ENCODE measurements at regions of chr2 and their contacts with region 1.

Region 1: GRCh38 chr2:178522950-178523595 is 42.8 kb downstream of the PLEKHA3 start:
- DNase-seq: peak; percentile 88
- H3K4me3 Mint-ChIP-seq: peak overlapping the region; percentile 89
- H3K27ac Mint-ChIP-seq: peak overlapping the region; percentile 80
- H3K4me1 Mint-ChIP-seq: peaks cover 57% of the 10 kb centered on the region
- H3K27me3 Mint-ChIP-seq: no peaks in the 10 kb centered on the region

Region 2: DNA sequence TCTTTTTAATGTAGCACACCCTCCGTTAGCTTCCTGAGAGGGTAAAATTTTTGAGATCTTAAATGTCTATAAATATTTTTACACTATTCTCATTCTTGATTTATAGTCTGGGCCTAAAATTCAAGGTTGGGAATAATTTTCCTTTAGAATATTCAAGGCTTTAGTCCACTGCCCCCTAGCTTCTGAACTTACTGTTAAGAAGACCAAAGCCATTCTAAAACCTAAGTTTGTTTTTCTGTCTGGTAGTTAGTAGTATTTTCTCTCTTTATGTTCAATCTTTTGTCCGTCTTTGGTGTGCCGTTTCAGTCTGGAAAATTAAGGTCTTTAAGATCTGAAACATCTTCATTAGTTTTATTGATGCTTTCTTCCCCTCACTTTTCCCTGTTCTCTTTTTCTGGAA is 314.3 kb before region 1 on chr2:
- CTCF ChIA-PET with region 1: no interaction called
- POLR2A ChIA-PET with region 1: no interaction called
- DNase-seq: no peak
- H3K4me3 Mint-ChIP-seq: no peak overlapping the region
- H3K27ac Mint-ChIP-seq: no peak overlapping the region
- H3K4me1 Mint-ChIP-seq: no peaks in the 10 kb centered on the region
- H3K27me3 Mint-ChIP-seq: peaks cover 36% of the 10 kb centered on the region

Region 3: DNA sequence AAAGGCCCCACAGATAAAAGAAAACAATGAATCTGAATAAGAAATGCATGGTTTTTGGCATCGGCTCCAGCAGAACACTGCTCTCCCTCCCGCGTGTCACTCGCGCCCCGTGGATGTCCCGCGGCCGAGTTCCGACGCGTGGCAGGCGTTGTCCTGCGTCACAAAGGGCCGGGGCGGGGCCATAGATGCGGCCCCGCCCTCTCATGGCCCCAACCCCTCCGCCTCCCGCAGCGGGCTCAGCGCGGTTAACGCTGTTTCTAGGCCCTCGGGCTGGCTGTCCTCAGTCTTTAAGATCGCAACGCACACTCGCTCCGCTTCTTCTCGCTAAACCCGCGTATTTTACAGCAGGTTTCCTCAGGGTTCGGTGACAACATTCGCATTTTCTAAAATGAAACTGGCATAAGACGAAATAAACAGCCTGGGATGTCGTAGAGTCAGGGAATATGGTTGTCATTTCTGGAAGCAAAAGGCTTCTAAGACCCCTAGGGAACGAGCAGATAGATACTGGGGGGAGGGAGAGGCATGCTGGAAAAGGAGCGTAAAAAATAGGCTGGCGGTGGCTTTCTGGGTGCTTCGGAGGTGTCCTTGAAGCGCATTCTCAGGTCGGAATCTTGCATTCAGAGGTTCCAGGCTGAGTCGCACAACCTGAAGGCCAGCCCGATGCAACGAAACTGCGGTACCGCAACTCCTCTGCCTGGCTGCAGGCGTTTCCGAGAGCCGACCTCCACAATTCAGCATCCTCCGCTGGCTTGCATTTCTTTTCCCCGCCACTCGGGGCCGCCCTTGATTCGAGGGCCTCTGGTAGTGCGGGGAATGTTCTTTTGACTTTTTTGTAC is 44.4 kb before region 1 on chr2 and contains the start of gene FKBP7:
- CTCF ChIA-PET with region 1: interaction called, 15 read pairs
- POLR2A ChIA-PET with region 1: interaction called, 8 read pairs
- DNase-seq: peak; percentile 87
- H3K4me3 Mint-ChIP-seq: peak within 1 kb of the TSS; percentile 95
- H3K27ac Mint-ChIP-seq: peak within 1 kb of the TSS; percentile 99
- H3K4me1 Mint-ChIP-seq: peaks cover 47% of the 10 kb centered on the region
- H3K27me3 Mint-ChIP-seq: no peaks in the 10 kb centered on the region
- total RNA-seq, gene FKBP7: 1.6 to 1.8 TPM